HepG2 (cell line): ENCODE measurements at regions of chr5 and their contacts with region 1.

Region 1: DNA sequence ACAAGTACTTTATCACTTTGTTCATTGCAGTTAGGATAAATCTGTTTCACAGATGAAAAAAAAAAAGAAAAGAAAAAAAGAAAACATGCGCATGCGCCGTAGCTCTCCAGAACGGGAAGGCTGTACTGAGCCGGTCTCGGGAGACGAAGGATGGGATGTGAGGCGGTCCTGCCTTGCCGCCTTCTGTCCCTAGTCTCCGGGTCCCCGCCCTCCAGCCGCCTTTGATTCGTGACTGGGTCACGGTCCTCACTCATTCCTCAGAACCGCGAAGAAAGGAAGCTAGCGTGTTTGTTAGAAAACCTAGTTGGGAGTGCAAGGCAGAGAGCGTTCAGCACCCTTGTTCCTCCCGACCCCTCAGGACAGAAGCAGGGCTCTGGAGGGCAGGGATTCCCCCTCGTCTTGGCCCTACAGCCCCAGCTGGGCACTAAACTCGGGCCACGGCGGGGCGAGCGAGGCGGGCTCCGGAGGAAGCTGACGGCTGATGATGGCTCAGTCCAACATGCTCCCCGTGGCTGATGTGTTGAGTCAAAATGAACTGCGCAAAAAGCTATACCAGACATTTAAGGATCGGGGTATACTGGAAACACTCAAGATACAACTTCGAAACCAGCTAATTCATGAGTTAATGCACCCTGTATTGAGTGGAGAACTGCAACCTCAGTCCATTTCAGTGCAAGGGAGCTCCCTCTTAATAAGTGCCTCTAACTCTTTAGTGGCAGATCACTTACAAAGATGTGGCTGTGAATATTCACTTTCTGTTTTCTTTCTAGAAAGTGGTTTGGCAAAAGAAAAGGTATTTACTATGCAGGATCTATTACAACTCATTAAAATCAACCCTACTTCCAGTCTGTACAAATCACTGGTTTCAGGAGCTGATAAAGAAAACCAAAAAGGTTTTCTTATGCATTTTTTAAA is 40.0 kb downstream of the CPLANE1 start:
- DNase-seq: no peak
- ATAC-seq: no peak
- H3K4me3 ChIP-seq: no peak overlapping the region
- H3K27ac ChIP-seq: no peak overlapping the region
- H3K4me1 ChIP-seq: no peaks in the 10 kb centered on the region
- H3K27me3 ChIP-seq: no peaks in the 10 kb centered on the region
- CTCF ChIP-seq: no peak
- EP300 ChIP-seq: no peak
- POLR2A ChIP-seq: no peak
- RAD21 ChIP-seq: no peak

Region 2: GRCh38 chr5:37034955-37035354 is 174.2 kb before region 1 on chr5:
- CTCF ChIA-PET with region 1: no interaction called
- POLR2A ChIA-PET with region 1: no interaction called
- in situ Hi-C with region 1: no loop called
- intact Hi-C with region 1: no loop called
- DNase-seq: no peak
- ATAC-seq: no peak
- H3K4me3 ChIP-seq: no peak overlapping the region
- H3K27ac ChIP-seq: no peak overlapping the region
- H3K4me1 ChIP-seq: no peaks in the 10 kb centered on the region
- H3K27me3 ChIP-seq: no peaks in the 10 kb centered on the region
- CTCF ChIP-seq: no peak
- EP300 ChIP-seq: no peak
- POLR2A ChIP-seq: no peak
- RAD21 ChIP-seq: no peak

Region 3: DNA sequence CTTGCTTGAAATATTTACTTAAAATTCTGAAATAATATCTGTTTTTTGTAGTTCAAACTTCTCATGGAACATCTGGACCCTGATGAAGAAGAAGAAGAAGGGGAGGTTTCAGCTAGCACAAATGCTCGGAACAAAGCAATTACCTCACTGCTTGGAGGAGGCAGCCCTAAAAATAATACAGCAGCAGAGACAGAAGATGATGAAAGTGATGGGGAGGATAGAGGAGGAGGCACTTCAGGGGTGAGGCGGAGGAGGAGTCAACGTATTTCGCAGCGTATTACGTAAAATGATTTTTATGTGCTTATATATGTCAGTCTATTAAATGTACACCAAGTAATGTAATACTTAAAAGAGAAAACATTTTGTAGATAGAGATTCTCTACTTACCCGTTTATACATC is 145.4 kb before region 1 on chr5:
- CTCF ChIA-PET with region 1: no interaction called
- POLR2A ChIA-PET with region 1: no interaction called
- in situ Hi-C with region 1: no loop called
- intact Hi-C with region 1: loop called (anchors 10 kb)
- DNase-seq: no peak
- ATAC-seq: no peak
- H3K4me3 ChIP-seq: no peak overlapping the region
- H3K27ac ChIP-seq: no peak overlapping the region
- H3K4me1 ChIP-seq: 0 out of 2 replicates have a peak, but pooled peaks cover 6% of the 10 kb centered on the region
- H3K27me3 ChIP-seq: no peaks in the 10 kb centered on the region
- CTCF ChIP-seq: no peak
- EP300 ChIP-seq: no peak
- POLR2A ChIP-seq: no peak
- RAD21 ChIP-seq: no peak